AG04449 (cell line): ENCODE measurements at regions of chr5 and their contacts with region 1.

Region 1: DNA sequence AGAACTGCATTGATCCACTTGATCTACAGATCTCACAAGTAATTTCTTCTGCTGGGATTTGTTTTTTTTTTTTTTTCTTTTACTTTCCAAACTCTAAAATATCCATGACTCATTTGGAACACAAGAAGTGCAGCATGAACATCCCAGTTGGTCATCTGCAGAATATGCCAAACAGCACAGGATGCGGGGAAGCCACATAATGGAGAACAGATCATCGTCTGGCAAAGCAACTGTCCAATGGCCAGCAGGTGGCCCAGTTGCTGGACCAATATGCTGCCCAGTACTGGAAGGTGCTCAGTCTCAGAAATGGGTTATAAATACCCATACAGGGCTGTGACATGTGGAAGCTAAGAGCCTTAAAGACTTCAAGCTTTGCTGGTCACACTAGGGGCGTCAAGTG is 221.3 kb upstream of the TAS2R1 start:
- DNase-seq: peak; percentile 84
- H3K4me3 ChIP-seq: no peak overlapping the region
- CTCF ChIP-seq: peak; percentile 59

Region 2: GRCh38 chr5:9861666-9862256 is 10.3 kb after region 1 on chr5:
- CTCF ChIA-PET with region 1: interaction called, 27 read pairs
- POLR2A ChIA-PET with region 1: no interaction called
- DNase-seq: peak; percentile 10
- H3K4me3 ChIP-seq: no peak overlapping the region
- CTCF ChIP-seq: no peak

Region 3: DNA sequence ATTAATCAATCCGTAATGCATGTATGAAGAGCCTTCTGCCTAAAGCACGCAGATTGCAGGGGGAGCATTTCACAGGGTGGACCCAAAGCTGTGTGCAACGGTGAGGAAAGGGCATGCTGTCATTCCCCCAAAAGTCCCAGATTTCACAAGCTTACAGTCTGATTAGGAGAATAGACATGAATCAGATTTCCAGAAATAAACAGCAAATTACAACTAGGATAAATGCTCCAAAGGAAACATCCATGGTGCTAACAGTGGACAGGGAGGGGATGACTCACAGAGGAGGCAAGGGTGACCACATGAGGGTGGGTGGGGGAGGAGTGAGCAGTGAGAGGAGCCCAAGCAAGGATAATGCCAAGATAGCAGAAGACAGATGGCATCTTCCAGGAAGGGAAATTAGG is 37.0 kb after region 1 on chr5:
- CTCF ChIA-PET with region 1: no interaction called
- POLR2A ChIA-PET with region 1: no interaction called
- DNase-seq: peak; percentile 69
- H3K4me3 ChIP-seq: no peak overlapping the region
- CTCF ChIP-seq: no peak